Activated naive CD4-positive, alpha-beta T cell treated with anti-CD3 and anti-CD28 coated beads for 36 hours (primary cell): ENCODE measurements at regions of chr6 and their contacts with region 1.

Region 1: DNA sequence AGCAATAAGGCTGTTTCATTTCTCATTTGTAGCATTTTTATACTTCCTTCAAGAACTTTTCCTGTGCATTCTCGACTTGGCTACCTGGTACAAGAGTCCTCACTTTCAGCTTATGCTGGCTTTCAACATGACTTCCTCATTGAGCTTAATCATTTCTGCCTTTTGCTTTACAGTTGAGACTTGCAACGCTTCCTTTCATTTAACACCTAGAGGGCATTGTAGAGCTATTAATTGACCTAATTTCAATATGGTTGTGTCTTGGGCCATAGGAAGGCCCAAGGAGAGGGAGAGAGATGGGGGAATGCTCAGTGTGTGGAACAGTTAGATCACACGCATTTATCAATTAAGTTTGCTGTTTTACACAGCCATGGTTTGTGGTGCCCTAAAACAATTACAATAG is 37.2 kb downstream of the SLC22A2 start:
- DNase-seq: no peak
- H3K4me3 Mint-ChIP-seq: no peak overlapping the region
- H3K27ac Mint-ChIP-seq: no peak overlapping the region
- H3K4me1 Mint-ChIP-seq: peaks cover 8% of the 10 kb centered on the region
- H3K27me3 Mint-ChIP-seq: peaks cover 19% of the 10 kb centered on the region

Region 2: GRCh38 chr6:158377860-158378259 is 1843.6 kb before region 1 on chr6:
- CTCF ChIA-PET with region 1: no interaction called
- intact Hi-C with region 1: no loop called
- DNase-seq: no peak
- H3K4me3 Mint-ChIP-seq: no peak overlapping the region
- H3K27ac Mint-ChIP-seq: no peak overlapping the region
- H3K4me1 Mint-ChIP-seq: peaks cover 8% of the 10 kb centered on the region
- H3K27me3 Mint-ChIP-seq: no peaks in the 10 kb centered on the region

Region 3: GRCh38 chr6:160269023-160269521 is 47.6 kb after region 1 on chr6:
- CTCF ChIA-PET with region 1: no interaction called
- intact Hi-C with region 1: no loop called
- DNase-seq: no peak
- H3K4me3 Mint-ChIP-seq: no peak overlapping the region
- H3K27ac Mint-ChIP-seq: no peak overlapping the region
- H3K4me1 Mint-ChIP-seq: no peaks in the 10 kb centered on the region
- H3K27me3 Mint-ChIP-seq: peaks cover 2% of the 10 kb centered on the region

Region 4: GRCh38 chr6:160355001-160355400 is 133.6 kb after region 1 on chr6:
- CTCF ChIA-PET with region 1: no interaction called
- intact Hi-C with region 1: loop called (anchors 10 kb)
- DNase-seq: peak; percentile 53
- H3K4me3 Mint-ChIP-seq: no peak overlapping the region
- H3K27ac Mint-ChIP-seq: no peak overlapping the region
- H3K4me1 Mint-ChIP-seq: peaks cover 2% of the 10 kb centered on the region
- H3K27me3 Mint-ChIP-seq: peaks cover 12% of the 10 kb centered on the region

Region 5: GRCh38 chr6:160534050-160534696 is 312.8 kb after region 1 on chr6:
- CTCF ChIA-PET with region 1: no interaction called
- intact Hi-C with region 1: loop called (anchors 5 kb)
- DNase-seq: peak; percentile 69
- H3K4me3 Mint-ChIP-seq: no peak overlapping the region
- H3K27ac Mint-ChIP-seq: no peak overlapping the region
- H3K4me1 Mint-ChIP-seq: no peaks in the 10 kb centered on the region
- H3K27me3 Mint-ChIP-seq: no peaks in the 10 kb centered on the region